Mammary epithelial cell (primary cell): ENCODE measurements at regions of chr2 and their contacts with region 1.

Region 1: DNA sequence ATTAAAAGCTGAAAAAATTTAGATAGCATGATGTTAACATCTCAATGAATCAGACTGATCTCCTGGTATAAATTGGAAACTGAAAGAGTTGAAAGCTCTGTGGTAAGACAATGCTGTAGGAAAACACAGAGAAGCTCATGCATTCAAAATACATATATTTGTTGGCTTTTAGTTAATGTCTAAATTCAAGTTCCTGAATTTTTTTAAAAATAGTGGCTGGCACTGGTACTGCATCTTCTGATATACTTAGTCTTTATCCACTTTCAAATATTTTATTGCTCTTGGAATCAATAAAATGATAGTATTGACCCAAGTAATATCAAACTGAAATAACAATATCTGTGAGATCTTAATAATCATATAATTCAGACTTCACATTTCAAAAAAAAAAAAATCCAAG is 151.4 kb upstream of the FIGN start:
- DNase-seq: no peak
- H3K4me3 ChIP-seq: no peak overlapping the region
- H3K27ac ChIP-seq: no peak overlapping the region
- H3K4me1 ChIP-seq: no peaks in the 10 kb centered on the region
- H3K27me3 ChIP-seq: no peaks in the 10 kb centered on the region
- CTCF ChIP-seq: peak; percentile 24 to 25

Region 2: DNA sequence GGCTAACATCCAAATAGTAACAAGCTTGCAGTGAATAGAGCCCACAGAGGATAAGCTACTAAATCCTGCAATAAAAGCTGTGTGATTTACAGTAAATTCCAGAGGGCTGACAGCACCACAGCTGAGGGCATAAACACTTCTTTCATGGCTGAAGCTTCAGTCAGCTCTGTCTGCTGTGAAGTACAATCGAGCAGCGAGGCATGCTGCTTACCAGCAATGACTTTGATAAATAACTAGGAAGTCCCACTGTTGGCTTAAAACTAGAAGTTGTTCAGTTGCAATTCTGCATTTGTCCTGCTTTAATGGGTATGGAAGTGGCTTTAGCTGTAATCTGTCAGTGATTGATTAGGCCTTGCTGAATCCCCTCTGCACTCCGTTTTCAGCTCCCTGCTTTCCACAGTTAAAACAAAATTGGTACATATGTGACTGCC is 86.2 kb before region 1 on chr2:
- CTCF ChIA-PET with region 1: no interaction called
- dilution Hi-C with region 1: loop called (anchors 10 kb)
- in situ Hi-C with region 1: no loop called
- intact Hi-C with region 1: no loop called
- DNase-seq: no peak
- H3K4me3 ChIP-seq: no peak overlapping the region
- H3K27ac ChIP-seq: no peak overlapping the region
- H3K4me1 ChIP-seq: no peaks in the 10 kb centered on the region
- H3K27me3 ChIP-seq: no peaks in the 10 kb centered on the region
- CTCF ChIP-seq: no peak